ENCODE measurements at regions of chr15 and their contacts with region 1.

Region 1: GRCh38 chr15:85785887-85786780 is 8.6 kb downstream of the KLHL25 start:
- DNase-seq: peak; percentile 71
- H3K4me3 ChIP-seq: no peak overlapping the region
- H3K27ac ChIP-seq: peak overlapping the region; percentile 48
- H3K4me1 ChIP-seq: peaks cover 32% of the 10 kb centered on the region
- H3K27me3 ChIP-seq: no peaks in the 10 kb centered on the region
- CTCF ChIP-seq: no peak

Region 2: GRCh38 chr15:85771781-85772445 is 14.2 kb before region 1 on chr15:
- CTCF ChIA-PET with region 1: no interaction called
- dilution Hi-C with region 1: no loop called
- in situ Hi-C with region 1: no loop called
- intact Hi-C with region 1: loop called (anchors 1 kb)
- DNase-seq: no peak
- H3K4me3 ChIP-seq: no peak overlapping the region
- H3K27ac ChIP-seq: peak overlapping the region; percentile 42
- H3K4me1 ChIP-seq: peaks cover 28% of the 10 kb centered on the region
- H3K27me3 ChIP-seq: no peaks in the 10 kb centered on the region
- CTCF ChIP-seq: no peak

Measured in mammary epithelial cell (primary cell).